ENCODE measurements at regions of chr19 and their contacts with region 1.

Region 1: DNA sequence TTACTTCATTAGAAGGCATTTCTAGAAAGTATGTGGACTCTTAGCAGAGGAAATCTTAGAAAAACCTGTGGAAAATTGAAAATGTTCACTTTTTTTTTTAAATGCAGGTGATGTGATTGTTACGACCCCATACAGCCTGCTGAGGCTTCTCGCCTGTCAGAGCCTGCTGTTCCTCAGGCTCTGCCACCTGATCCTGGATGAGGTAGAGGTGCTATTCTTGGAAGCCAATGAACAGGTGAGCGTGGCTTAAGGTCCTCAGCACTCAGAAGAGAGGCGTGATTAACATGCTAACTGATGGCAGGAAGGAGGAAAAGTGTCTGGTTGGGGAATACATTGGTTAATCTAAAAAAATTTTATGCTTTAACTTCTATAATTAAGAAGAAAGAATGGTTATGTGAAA is 71.4 kb downstream of the SLC7A9 start:
- DNase-seq: no peak
- H3K4me3 Mint-ChIP-seq: no peak overlapping the region
- H3K27ac Mint-ChIP-seq: no peak overlapping the region
- H3K4me1 Mint-ChIP-seq: peaks cover 23% of the 10 kb centered on the region
- H3K27me3 Mint-ChIP-seq: peaks cover under 1% of the 10 kb centered on the region

Region 2: GRCh38 chr19:32630338-32630737 is 167.9 kb before region 1 on chr19:
- intact Hi-C with region 1: no loop called
- DNase-seq: no peak
- H3K4me3 Mint-ChIP-seq: no peak overlapping the region
- H3K27ac Mint-ChIP-seq: no peak overlapping the region
- H3K4me1 Mint-ChIP-seq: no peaks in the 10 kb centered on the region
- H3K27me3 Mint-ChIP-seq: no peaks in the 10 kb centered on the region

Region 3: DNA sequence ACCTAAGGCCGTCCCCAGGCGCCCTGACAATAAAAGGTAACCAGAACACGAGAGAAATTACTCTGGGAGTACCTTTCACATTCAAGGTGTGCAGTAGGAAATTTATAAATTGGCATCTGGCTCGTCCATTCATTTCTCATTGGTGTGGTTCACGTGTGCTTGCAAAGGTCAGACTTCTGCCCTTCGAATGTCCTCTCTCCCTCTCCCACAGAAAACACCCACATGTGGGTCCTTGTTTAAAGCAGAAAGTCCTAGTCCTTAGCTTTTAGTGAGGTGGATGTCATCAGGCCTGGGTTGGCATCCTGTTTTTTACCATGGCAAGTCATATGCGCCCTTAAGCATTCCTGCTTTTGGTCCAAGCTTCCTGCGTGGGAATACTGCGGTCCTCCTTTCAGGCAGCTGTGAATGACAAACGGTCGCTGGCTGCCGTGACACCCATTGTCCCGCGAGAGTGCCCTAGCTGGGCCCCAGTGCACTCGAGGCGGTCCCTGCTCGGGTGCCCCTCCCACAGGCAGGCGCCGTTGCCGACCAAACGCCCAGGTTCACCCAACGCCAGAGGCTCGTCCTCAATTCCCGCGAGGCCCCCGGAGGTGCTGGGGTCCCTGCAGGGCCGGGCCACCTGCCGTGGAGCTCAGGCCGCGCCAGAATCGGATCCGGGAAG is 106.8 kb before region 1 on chr19 and contains the start of gene NUDT19:
- intact Hi-C with region 1: loop called (anchors 2 kb)
- DNase-seq: peak; percentile 94
- H3K4me3 Mint-ChIP-seq: peak within 1 kb of the TSS; percentile 94
- H3K27ac Mint-ChIP-seq: peak within 1 kb of the TSS; percentile 97
- H3K4me1 Mint-ChIP-seq: peaks cover 44% of the 10 kb centered on the region
- H3K27me3 Mint-ChIP-seq: no peaks in the 10 kb centered on the region
- total RNA-seq, gene NUDT19: 25.3 and 25.9 TPM in 2 replicates

Region 4: GRCh38 chr19:32748497-32748896 is 49.7 kb before region 1 on chr19:
- intact Hi-C with region 1: no loop called
- DNase-seq: no peak
- H3K4me3 Mint-ChIP-seq: no peak overlapping the region
- H3K27ac Mint-ChIP-seq: no peak overlapping the region
- H3K4me1 Mint-ChIP-seq: no peaks in the 10 kb centered on the region
- H3K27me3 Mint-ChIP-seq: peaks cover 18% of the 10 kb centered on the region

Region 5: GRCh38 chr19:32830231-32831014 is 32.2 kb after region 1 on chr19:
- intact Hi-C with region 1: no loop called
- DNase-seq: no peak
- H3K4me3 Mint-ChIP-seq: no peak overlapping the region
- H3K27ac Mint-ChIP-seq: no peak overlapping the region
- H3K4me1 Mint-ChIP-seq: peaks cover 5% of the 10 kb centered on the region
- H3K27me3 Mint-ChIP-seq: peaks cover 9% of the 10 kb centered on the region

Measured in activated CD4-positive, alpha-beta T cell treated with anti-CD3 and anti-CD28 coated beads, Interleukin-2, amount 10 ng/mL, durations not matched to agents 24 days and 14 days (primary cell).